AG04449 (cell line): ENCODE measurements at regions of chr6 and their contacts with region 1.

Region 1: DNA sequence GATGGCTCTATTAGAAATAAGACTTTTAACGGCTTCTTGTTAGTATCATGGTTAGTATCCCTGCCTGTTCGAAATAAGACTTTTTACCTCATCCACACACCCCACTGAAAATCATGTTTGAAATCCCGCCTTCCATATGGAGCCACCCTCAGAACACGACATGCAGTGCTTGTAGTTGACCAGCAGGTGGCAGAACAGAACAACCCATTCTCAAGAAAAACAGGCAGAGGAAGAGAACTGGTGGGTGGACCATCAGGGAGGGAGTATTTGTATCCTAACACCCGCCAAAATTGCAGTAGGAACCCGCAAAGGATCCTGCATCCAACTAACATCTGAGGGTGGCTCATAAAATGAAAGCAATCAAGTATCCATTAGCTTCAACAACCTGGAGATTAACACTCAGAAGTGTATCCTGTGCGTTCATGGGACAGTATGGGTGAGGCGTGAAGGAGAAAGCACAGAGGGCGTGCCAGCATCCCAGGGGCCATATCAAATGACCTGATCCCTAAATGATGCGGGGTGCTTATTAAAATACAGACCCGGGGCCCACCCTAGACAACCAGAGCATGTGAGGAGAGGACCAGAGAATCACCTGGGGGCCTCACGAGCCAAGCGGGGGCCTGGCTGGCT is 89.6 kb upstream of the NHSL1 start:
- DNase-seq: no peak
- H3K4me3 ChIP-seq: no peak overlapping the region
- CTCF ChIP-seq: peak; percentile 90

Region 2: GRCh38 chr6:138517635-138518034 is 71.3 kb before region 1 on chr6:
- CTCF ChIA-PET with region 1: interaction called, 11 read pairs
- POLR2A ChIA-PET with region 1: no interaction called
- DNase-seq: no peak
- H3K4me3 ChIP-seq: no peak overlapping the region
- CTCF ChIP-seq: peak; percentile 80

Region 3: DNA sequence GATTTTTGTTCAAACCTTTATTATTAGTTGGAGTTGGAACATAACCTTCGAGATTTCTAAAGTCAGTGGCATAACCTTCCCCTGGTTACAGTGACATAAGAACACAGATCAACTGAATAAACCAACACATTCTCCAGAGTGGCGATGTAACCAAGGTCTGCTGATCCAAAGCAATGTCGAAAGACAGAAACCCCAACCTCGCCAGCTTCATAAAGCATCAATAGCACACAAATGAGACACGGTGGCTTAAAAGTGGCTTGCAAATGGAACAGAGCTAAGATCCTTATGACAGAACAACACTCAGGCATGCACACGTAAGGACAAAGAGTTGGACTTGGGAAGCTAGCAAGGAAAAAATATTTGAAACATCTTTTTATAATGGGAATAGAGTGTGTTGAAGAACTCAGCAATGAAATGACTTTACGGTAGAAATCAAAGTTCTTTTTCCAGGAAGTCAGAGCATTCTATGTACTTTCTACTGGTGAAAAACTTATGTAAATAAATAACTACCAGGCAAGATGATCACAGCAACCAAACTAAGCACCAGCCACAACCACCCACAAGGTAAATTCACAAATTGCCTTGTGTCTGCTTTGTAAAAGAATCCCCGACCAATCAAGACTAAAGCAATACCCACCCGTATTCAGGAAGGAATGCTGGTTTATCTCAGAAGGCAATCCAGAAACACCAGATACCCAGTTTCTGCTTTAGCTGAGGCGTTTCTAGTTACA is 28.6 kb before region 1 on chr6:
- CTCF ChIA-PET with region 1: interaction called, 13 read pairs
- POLR2A ChIA-PET with region 1: interaction called, 3 read pairs
- DNase-seq: no peak
- H3K4me3 ChIP-seq: no peak overlapping the region
- CTCF ChIP-seq: no peak

Region 4: GRCh38 chr6:138600726-138601125 is 11.8 kb after region 1 on chr6:
- CTCF ChIA-PET with region 1: interaction called, 63 read pairs
- POLR2A ChIA-PET with region 1: no interaction called
- DNase-seq: no peak
- H3K4me3 ChIP-seq: no peak overlapping the region
- CTCF ChIP-seq: no peak

Region 5: DNA sequence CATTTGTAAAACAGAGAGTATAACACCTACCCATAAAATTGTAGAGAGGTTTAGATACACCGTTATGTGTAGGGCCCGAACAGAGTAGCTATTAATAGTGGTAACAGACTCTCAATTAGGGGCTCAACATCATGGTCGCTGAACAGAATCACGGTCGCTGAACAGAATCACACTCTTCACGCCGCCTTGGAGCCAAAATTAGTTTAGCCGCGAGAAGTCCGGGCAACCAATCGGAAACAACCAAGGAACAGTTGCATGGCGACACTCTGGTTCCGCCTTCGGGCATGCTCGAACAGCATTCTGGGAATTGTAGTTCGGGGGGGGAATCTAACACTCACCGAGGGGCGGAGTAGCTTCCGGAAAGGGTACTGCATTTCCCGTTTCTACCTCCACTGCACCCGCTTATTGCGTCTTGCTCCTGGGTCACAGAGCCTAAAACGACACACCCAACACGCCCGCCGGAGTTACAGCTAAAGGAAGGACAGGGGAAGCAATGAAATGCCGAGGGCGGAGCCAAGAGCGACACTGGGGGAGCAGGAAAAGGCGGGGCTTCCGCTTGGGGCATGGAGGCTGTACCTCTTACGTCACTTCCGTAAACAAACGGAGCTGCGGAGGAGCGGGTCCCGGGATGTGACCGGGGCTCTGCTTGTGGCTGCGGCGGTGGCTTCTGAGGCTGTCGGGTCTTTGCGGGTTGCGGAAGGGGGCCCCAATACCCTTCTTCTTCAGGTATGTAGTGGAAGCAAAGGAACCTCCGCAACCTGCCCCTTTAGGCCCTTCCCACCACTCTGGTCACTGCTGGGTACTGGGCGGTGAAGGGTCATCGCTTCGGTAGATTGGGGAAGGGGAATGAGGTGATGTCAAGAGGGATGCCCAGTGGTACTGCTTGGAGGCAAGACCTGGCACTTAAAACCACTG is 184.5 kb after region 1 on chr6 and contains the start of gene CCDC28A:
- CTCF ChIA-PET with region 1: interaction called, 396 read pairs
- POLR2A ChIA-PET with region 1: no interaction called
- DNase-seq: peak; percentile 62
- H3K4me3 ChIP-seq: peak within 1 kb of the TSS; percentile 98
- CTCF ChIP-seq: no peak